ENCODE measurements at regions of chr11 and their contacts with region 1.

Region 1: GRCh38 chr11:128135451-128135850 is 451.9 kb downstream of the ETS1 start:
- DNase-seq: no peak
- ATAC-seq: no peak
- H3K4me3 ChIP-seq: no peak overlapping the region
- H3K27ac ChIP-seq: no peak overlapping the region
- H3K4me1 ChIP-seq: peaks cover 0 to 2% of the 10 kb centered on the region in 2 donors
- H3K27me3 ChIP-seq: no peaks in the 10 kb centered on the region

Region 2: GRCh38 chr11:127843483-127844396 is 291.7 kb before region 1 on chr11:
- intact Hi-C with region 1: loop called in 1 of 2 experiments (anchors 10 kb)
- DNase-seq: peak; percentile 84 to 92
- ATAC-seq: no peak
- H3K4me3 ChIP-seq: no peak overlapping the region
- H3K27ac ChIP-seq: no peak overlapping the region
- H3K4me1 ChIP-seq: no peaks in the 10 kb centered on the region
- H3K27me3 ChIP-seq: no peaks in the 10 kb centered on the region

Region 3: GRCh38 chr11:128039140-128040021 is 96.1 kb before region 1 on chr11:
- intact Hi-C with region 1: loop called (anchors 5 kb)
- DNase-seq: peak in 1 of 2 donors; percentile 76
- ATAC-seq: no peak
- H3K4me3 ChIP-seq: no peak overlapping the region
- H3K27ac ChIP-seq: no peak overlapping the region
- H3K4me1 ChIP-seq: no peaks in the 10 kb centered on the region
- H3K27me3 ChIP-seq: no peaks in the 10 kb centered on the region

Region 4: DNA sequence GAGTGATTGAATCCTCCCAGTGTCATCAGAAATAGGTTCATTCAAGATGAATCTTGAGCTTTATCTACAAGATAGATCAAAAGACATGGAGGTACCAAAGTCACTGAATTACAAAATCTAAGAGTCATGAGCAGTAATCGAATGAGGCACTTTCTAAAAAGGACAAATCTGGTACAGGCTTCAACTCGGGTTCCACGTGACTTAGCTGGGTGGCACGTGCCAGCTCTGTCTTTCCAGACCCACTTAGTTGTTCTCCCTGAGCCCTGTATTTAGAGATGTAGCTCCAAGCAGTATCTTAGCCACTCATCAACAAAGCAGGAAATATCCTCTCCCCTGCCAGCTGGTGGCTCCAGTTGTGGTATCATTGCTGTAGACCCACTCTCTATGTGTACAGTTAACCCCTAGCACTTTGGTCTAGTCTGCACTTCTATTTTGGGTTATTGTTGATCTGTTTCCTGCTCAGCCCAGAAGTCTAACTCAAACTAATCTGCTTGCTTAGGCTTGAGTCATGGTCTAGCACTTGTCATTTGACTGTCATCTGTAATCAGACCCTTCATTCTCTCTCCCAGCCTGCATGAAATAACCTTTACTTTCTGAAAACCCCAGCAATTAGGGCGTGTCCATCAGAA is 76.8 kb before region 1 on chr11:
- intact Hi-C with region 1: loop called in 1 of 2 experiments (anchors 5 kb)
- DNase-seq: no peak
- ATAC-seq: no peak
- H3K4me3 ChIP-seq: no peak overlapping the region
- H3K27ac ChIP-seq: peak overlapping the region; percentile 95 to 99
- H3K4me1 ChIP-seq: peaks cover 5 to 16% of the 10 kb centered on the region in 2 donors
- H3K27me3 ChIP-seq: no peaks in the 10 kb centered on the region

Region 5: DNA sequence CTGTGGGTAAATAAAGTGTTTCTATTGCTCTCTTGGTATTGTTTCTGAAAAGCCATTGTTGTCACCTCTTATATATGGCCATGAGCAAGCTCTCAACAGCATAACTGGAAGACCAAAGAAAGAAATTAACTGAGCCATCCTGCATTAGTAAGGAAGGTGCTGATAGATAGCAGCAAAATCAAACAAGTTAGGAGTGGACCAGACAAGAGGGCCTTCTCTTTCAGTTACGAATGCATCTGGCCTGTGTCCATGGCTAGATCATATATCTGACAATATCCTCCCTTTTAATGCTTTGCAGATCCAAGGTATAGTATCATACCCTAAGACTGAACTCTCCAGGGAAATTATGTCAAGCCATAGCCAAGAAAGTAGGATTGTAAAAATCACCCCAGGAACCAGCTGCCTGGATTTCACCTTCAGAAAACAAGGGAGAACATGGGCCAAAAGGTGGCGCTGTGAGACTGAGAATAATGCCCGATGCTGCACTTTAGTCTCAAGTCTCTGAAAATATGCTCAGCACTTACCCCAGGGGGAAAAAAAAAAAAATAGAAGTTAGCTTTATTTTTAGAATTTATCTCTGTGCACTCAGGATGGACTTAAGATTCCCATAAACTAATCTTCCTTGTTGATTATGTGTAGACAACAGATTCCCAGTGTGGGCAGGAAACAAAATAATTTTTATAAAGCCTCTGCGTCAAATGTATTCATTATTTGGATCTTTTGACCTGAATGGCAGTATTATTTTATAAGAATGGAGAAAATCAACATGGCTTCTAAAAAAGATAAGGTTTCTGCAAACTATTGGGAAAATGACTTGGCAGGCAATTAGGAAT is 36.8 kb after region 1 on chr11:
- intact Hi-C with region 1: no loop called
- DNase-seq: peak; percentile 84 to 91
- ATAC-seq: peak; percentile 83
- H3K4me3 ChIP-seq: no peak overlapping the region
- H3K27ac ChIP-seq: no peak overlapping the region
- H3K4me1 ChIP-seq: no peaks in the 10 kb centered on the region
- H3K27me3 ChIP-seq: peaks cover 0 to 2% of the 10 kb centered on the region in 2 donors

Measured in aorta (tissue), 5 donors.